ENCODE measurements at regions of chr17 and their contacts with region 1.

Region 1: DNA sequence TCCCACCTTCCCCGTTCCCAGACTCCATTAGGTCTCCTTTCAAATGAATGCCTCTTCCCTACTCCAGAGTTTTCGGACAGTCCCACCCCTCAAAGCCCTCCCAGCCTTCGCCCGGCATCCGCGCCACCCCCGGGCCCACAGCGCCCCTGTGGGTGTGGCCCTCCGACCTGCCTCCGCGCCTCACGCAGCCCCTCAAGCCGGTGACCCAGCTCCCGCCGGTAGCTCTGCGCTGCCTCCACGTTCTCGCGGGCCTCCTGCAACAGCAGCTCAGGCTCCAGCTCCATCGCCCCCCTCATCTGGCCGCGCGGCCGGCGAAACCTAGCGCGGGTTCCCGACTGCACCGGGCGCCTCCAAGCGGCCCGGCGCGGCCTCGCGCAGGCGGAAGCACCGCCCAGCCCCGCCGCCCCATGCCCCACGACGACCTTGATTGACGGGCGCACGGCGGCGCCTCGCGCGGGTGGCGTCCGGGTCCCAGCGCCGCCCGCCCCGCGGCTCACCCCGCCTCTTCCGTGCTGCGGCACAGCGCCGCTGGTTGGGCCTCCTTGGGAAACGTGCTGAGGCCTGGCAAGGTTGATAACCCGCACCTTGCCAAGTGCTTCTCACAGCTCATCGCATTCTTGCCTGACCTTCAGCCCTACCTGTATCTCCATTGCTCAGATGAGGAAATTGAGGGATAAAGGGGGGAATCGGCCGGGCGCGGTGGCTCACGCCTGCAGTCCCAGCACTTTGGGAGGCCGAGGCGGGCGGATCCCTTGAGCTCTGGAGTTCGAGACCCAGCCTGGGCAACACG is at the start of gene CRLF3:
- H3K4me3 Mint-ChIP-seq: peak within 1 kb of the TSS; percentile 100
- H3K27ac Mint-ChIP-seq: peak within 1 kb of the TSS; percentile 95
- H3K4me1 Mint-ChIP-seq: peaks cover 45% of the 10 kb centered on the region
- H3K27me3 Mint-ChIP-seq: no peaks in the 10 kb centered on the region

Region 2: DNA sequence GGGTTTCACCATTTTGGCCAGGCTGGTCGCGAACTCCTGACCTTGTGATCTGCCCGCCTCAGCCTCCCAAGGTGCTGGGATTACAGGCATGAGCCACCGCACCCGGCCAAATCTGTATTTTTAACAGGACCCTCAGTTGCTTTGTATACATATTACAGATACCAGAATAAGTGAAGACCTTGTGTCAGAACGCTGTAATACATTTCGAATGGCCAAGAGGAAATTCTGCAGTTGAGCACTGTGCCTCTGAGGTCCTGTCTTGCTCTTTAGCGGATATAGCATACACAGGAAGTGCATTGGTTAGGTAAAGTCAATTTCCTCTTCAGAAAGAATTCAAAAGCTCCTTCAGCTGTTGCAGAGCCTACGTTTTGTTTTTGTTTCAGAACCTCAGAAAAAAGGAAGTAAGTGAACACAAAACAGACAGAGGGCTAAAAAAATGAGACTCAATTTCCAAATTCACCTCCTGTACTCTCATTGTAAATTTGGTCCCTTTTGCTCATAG is 15.7 kb before region 1 on chr17:
- intact Hi-C with region 1: loop called (anchors 2 kb)
- H3K4me3 Mint-ChIP-seq: peak overlapping the region; percentile 58
- H3K27ac Mint-ChIP-seq: peak overlapping the region; percentile 81
- H3K4me1 Mint-ChIP-seq: peaks cover 46% of the 10 kb centered on the region
- H3K27me3 Mint-ChIP-seq: no peaks in the 10 kb centered on the region

Measured in dendritic cell treated with granulocyte-macrophage colony-stimulating factor and Interleukin-4, amounts not matched to agents 40 ng/mL and 50 ng/mL, for 4 days (primary cell).